CD8-positive, alpha-beta T cell (primary cell): ENCODE measurements at regions of chrX and their contacts with region 1.

Region 1: GRCh38 chrX:139290310-139290709 is 240.2 kb upstream of the F9 start:
- DNase-seq: no peak
- ATAC-seq: no peak
- H3K4me3 ChIP-seq: no peak overlapping the region
- H3K4me3 Mint-ChIP-seq: no peak overlapping the region
- H3K27ac ChIP-seq: no peak overlapping the region
- H3K27ac Mint-ChIP-seq: no peak overlapping the region
- H3K4me1 ChIP-seq: no peaks in the 10 kb centered on the region
- H3K4me1 Mint-ChIP-seq: no peaks in the 10 kb centered on the region
- H3K27me3 ChIP-seq: no peaks in the 10 kb centered on the region
- H3K27me3 Mint-ChIP-seq: no peaks in the 10 kb centered on the region
- CTCF ChIP-seq: no peak

Region 2: DNA sequence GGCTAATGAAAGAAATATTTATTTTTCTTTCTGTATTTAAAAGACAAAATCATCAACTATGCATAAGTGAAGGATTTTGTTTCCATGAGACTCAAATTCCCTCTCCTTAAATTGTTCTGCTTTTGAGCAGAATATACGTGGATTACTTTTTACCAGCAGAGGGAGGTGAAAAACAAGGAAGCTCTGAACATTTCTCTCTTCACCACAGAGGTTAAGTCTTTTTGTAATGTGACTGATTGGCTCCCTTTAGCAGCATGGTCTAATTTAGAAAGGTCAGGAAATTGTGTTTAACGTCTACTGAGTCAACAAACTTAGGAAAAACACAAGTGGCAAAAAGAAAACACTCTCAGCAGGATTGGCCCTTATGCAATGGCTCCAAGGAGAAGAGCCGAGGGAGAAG is 185.1 kb after region 1 on chrX:
- CTCF ChIA-PET with region 1: no interaction called
- POLR2A ChIA-PET with region 1: no interaction called
- intact Hi-C with region 1: loop called in 1 of 2 experiments (anchors 5 kb)
- DNase-seq: no peak
- ATAC-seq: no peak
- H3K4me3 ChIP-seq: no peak overlapping the region
- H3K4me3 Mint-ChIP-seq: no peak overlapping the region
- H3K27ac ChIP-seq: no peak overlapping the region
- H3K27ac Mint-ChIP-seq: no peak overlapping the region
- H3K4me1 ChIP-seq: no peaks in the 10 kb centered on the region
- H3K4me1 Mint-ChIP-seq: no peaks in the 10 kb centered on the region
- H3K27me3 ChIP-seq: no peaks in the 10 kb centered on the region
- H3K27me3 Mint-ChIP-seq: no peaks in the 10 kb centered on the region
- CTCF ChIP-seq: no peak